ENCODE measurements at regions of chr5 and their contacts with region 1.

Region 1: GRCh38 chr5:35617435-35618303 is at the start of gene SPEF2:
- DNase-seq: peak; percentile 36
- ATAC-seq: peak; percentile 78
- H3K4me3 Mint-ChIP-seq: peak within 1 kb of the TSS; percentile 85
- H3K27ac Mint-ChIP-seq: no peak within 1 kb of the TSS
- H3K4me1 Mint-ChIP-seq: peaks cover 10% of the 10 kb centered on the region
- H3K27me3 Mint-ChIP-seq: peaks cover 15% of the 10 kb centered on the region
- CTCF ChIP-seq: no peak
- total RNA-seq, gene SPEF2: 2.4 and 3.7 TPM in 2 replicates

Region 2: DNA sequence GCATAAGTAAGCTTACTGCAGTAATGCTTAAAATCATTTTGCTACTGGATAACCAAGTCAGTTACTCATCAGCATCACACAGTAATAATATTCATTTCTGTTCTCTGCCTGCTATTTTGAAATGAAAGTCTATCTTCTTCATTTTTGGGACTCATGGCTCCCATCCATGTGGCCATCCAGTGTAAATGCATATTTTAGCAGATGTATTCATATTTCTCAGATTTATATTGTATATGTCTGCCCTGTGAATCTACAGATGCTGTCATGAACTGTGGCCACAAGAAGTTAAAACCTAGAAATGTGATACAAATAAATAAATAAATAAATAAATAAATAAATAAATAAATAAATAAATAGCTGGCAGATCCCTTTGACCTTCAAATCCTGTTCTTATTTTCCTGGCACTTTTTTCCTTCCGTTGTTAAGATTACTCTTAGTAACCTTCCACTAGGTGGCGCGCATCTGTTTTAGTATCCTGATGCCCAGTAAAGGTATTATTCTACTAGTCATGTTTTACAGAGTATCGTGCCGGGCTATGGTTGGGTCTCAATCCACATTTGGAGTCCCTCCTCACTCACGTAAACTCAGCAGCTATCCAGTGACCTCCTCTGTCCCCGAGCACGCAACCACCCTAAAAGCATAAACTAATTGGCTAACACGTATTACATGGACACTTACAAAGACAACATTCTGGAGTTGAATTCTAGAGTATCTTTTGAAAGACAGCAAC is 159.9 kb after region 1 on chr5:
- CTCF ChIA-PET with region 1: interaction called, 4 read pairs
- POLR2A ChIA-PET with region 1: no interaction called
- intact Hi-C with region 1: loop called (anchors 2 kb)
- DNase-seq: no peak
- ATAC-seq: no peak
- H3K4me3 Mint-ChIP-seq: no peak overlapping the region
- H3K27ac Mint-ChIP-seq: no peak overlapping the region
- H3K4me1 Mint-ChIP-seq: no peaks in the 10 kb centered on the region
- H3K27me3 Mint-ChIP-seq: no peaks in the 10 kb centered on the region
- CTCF ChIP-seq: no peak

Region 3: DNA sequence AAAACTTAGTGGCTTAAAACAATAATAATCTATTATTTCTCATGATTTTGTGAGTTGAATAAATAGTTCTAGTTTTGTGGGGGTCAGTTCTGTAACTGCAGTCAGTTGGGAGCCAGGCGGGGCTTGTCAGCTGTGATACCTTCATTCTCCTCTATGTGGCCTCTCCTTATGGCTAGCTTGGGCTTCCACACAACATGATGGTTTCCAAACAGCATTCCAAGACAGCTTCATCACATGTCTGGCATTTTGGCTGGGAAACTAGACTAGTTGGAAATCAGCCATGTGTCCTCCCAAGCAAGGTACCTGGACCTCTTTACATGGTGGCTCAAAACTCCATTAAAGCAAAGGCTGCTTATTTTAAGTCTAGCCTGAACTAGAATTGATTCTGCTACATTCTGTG is 745.4 kb after region 1 on chr5:
- CTCF ChIA-PET with region 1: no interaction called
- POLR2A ChIA-PET with region 1: no interaction called
- intact Hi-C with region 1: no loop called
- DNase-seq: no peak
- ATAC-seq: no peak
- H3K4me3 Mint-ChIP-seq: no peak overlapping the region
- H3K27ac Mint-ChIP-seq: no peak overlapping the region
- H3K4me1 Mint-ChIP-seq: no peaks in the 10 kb centered on the region
- H3K27me3 Mint-ChIP-seq: no peaks in the 10 kb centered on the region
- CTCF ChIP-seq: no peak